Dorsolateral prefrontal cortex (tissue), 120 donors: ENCODE measurements at regions of chr16 and their contacts with region 1.

Region 1: DNA sequence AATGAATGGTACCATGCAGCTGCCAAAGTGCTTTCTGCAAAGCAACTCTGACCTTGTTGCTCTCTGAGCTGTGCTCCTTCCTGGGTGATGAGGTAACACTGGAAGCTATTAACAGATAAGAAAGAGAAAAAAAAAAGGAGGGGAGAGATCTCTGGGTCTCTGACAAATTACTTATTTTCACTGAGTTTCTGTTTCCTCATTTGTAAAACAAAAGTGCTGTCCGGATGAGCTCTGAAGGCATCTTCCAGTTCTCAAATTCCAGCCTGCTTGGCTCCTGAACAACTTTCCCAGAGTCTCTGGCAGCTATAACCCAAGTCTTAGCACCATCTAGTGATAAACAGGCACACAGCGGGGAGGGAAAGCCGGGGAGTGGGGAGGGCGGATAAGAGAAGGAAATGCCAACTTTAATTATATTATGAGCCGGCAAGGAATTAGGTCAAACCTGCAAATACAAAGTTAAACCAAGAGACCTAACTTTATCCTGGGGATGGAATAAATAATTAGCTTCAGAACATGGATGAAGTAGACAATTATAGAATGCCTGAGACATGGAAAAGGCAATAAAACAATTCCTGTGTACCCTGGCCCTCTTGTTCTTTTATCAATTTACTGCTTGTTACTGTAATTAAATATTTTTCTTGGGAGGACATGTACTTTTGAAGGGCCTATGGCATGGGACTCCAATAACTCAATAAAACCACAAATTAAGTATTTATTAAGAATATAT is 61.3 kb upstream of the KIFC3 start:
- DNase-seq: peak in 9 of 10 donors; percentile 24 to 74 (median 54)
- H3K4me3 ChIP-seq: peak overlapping the region in 1 of 59 donors; percentile 22
- H3K27ac ChIP-seq: no peak overlapping the region
- H3K27me3 ChIP-seq: peaks cover 0 to 3% (median 0%) of the 10 kb centered on the region in 45 donors
- CTCF ChIP-seq: peak in 54 of 56 donors; percentile 41 to 89 (median 72)

Region 2: DNA sequence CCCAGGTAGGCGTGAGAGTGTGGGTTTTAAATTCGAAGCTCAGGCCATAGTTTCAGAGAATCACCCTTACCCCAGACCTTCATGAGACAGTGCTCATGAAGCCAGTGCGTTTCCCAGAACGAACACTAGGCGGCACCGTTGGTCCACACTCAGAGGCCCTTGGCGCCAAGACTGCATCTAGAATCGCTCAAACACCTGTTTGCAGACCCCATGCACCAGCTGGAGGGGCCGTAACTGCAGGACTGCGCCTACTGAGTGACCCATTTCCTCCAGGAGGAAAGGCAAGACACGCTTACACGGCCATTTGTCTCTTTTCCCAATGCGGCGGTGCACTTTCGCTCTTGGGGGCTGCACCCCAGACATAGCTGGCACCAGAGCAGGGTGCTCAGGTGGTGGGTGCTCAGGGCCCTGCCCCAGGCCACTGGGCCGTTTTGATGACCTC is 287.1 kb before region 1 on chr16:
- intact Hi-C with region 1: loop called in 1 of 2 experiments (anchors 5 kb)
- DNase-seq: peak; percentile 67 to 90 (median 79)
- H3K4me3 ChIP-seq: peak overlapping the region in 6 of 59 donors; percentile 6 to 46 (median 23)
- H3K27ac ChIP-seq: no peak overlapping the region
- H3K27me3 ChIP-seq: peaks cover 0 to 8% (median 0%) of the 10 kb centered on the region in 45 donors
- CTCF ChIP-seq: peak; percentile 62 to 97 (median 92)

Region 3: GRCh38 chr16:57757326-57757786 is 106.2 kb before region 1 on chr16:
- intact Hi-C with region 1: loop called (anchors 5 kb)
- DNase-seq: peak; percentile 76 to 90 (median 84)
- H3K4me3 ChIP-seq: no peak overlapping the region
- H3K27ac ChIP-seq: peak overlapping the region in 37 of 59 donors; percentile 5 to 85 (median 52)
- H3K27me3 ChIP-seq: no peaks in the 10 kb centered on the region
- CTCF ChIP-seq: peak; percentile 68 to 99 (median 96)

Region 4: DNA sequence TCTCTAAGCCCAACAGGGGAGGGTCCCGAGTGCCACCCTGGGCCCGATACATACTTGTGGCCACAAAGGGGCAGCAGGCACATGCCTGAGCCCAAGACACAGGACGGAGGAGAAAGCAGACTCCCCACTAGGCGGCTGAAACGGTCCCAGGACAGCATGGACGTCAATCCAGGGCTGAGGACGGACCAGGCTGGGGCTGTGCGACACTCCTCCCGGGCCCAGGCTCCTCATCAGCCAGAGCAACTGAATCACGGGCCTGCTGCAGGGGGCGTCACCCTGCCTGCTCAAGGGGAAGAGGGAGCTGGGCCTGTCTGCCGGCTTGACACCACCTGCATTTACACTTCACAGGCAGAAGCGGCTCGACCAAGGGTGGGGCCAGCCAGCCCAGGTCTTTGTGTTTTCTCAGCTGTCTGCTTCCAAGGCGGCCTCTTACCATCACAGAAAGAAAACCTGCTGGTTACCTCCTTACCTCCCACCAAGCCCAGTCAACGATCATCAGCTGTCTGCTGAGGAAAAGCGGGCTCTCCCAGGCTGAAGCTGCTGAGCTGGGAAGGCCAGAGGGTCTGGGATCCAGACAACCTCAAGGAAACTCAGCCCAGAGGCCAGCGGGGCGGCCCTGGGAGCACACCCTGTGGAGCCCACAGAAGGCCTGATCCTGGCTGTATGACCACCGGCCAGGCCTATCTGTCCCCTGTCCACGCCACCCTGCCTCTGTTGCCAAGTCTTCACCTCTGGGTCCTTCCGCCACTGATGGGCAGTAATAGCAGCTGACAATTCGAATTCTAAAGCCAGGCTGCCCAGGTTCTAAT is 87.7 kb before region 1 on chr16:
- intact Hi-C with region 1: loop called in 1 of 2 experiments (anchors 2 kb)
- DNase-seq: peak in 7 of 10 donors; percentile 54 to 71 (median 64)
- H3K4me3 ChIP-seq: no peak overlapping the region
- H3K27ac ChIP-seq: peak overlapping the region in 9 of 59 donors; percentile 2 to 76 (median 30)
- H3K27me3 ChIP-seq: no peaks in the 10 kb centered on the region
- CTCF ChIP-seq: peak; percentile 12 to 82 (median 64)

Region 5: DNA sequence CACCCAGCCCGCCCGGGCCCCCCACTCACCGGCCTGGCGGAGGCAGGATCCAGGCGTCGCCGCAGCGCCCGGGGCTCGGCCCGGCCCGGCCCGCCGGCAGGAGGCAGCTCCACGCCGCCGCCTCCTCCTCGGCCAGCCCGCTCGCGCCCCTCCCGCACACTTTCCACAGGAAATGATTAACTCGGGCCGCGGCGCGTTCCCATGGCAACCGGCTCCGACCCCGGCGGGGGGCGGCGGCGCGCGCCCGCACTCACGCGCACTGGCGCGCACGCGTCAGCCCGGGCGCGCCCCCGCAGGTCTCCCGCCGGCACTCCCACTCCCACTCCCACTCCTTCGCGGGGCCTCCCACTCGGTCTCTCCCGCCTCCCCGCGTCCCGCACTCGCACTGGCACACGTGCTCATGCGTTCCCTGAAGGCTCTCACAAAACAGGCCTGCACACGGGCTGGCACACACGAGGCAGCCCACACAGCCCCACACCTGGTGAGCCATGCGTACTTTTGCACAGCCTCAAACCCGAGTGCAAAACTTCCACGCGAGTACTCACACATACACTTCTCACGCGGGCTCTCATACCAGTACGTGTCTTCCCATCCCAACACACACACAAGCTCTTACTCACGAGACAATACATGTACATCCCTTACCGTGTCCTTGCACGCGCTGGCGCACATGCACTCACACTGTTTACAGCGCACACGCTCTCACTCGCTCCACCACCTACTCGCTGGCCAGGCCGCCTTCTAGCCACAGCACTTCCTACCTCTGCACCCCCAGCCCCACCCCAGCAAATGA is 61.1 kb before region 1 on chr16 and contains the start of gene KIFC3:
- intact Hi-C with region 1: loop called (anchors 2 kb)
- DNase-seq: peak; percentile 49 to 92 (median 86)
- H3K4me3 ChIP-seq: peak within 1 kb of the TSS; percentile 55 to 89 (median 73)
- H3K27ac ChIP-seq: peak within 1 kb of the TSS; percentile 84 to 99 (median 94)
- H3K27me3 ChIP-seq: no peaks in the 10 kb centered on the region
- CTCF ChIP-seq: peak in 34 of 56 donors; percentile 7 to 70 (median 48)
- total RNA-seq, gene KIFC3: 29.4 to 72.9 (median 48.3) TPM

Region 6: DNA sequence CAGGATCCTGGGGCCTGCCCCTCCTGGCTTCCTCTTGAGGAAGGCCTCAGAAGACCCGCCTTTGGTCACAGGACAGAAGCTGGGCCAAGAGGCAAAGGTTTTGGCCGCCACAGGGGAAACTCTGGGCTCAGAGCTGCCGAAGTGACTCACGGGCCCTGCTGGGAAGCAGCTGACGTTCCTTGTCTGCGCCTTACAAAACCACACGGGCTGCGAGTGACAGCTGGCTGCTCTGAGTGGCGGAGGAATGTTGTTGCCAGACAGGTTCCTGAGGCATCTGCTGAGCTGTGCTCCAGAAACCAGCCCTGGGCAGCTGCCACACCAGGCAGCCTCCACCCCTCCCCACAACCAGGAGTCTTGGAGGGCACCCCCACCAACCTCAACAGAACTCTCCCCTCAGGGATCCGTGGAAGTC is 47.3 kb before region 1 on chr16:
- intact Hi-C with region 1: loop called in 1 of 2 experiments (anchors 5 kb)
- DNase-seq: peak in 8 of 10 donors; percentile 36 to 86 (median 67)
- H3K4me3 ChIP-seq: no peak overlapping the region
- H3K27ac ChIP-seq: peak overlapping the region in 28 of 59 donors; percentile 1 to 72 (median 40)
- H3K27me3 ChIP-seq: no peaks in the 10 kb centered on the region
- CTCF ChIP-seq: no peak